GM12878 (cell line): ENCODE measurements at regions of chr11 and their contacts with region 1.

Region 1: GRCh38 chr11:74870485-74870884 is 78.4 kb downstream of the XRRA1 start:
- DNase-seq: no peak
- ATAC-seq: peak; percentile 83
- H3K4me3 ChIP-seq: no peak overlapping the region
- H3K27ac ChIP-seq: no peak overlapping the region
- H3K4me1 ChIP-seq: no peaks in the 10 kb centered on the region
- H3K27me3 ChIP-seq: no peaks in the 10 kb centered on the region
- CTCF ChIP-seq: peak in 2 of 3 experiments; percentile 41 to 48; a peak in 5 of 6 replicates
- EP300 ChIP-seq: no peak
- POLR2A ChIP-seq: no peak
- RAD21 ChIP-seq: peak; percentile 47

Region 2: GRCh38 chr11:73804712-73805111 is 1065.8 kb before region 1 on chr11:
- CTCF ChIA-PET with region 1: no interaction called
- POLR2A ChIA-PET with region 1: no interaction called
- RAD21 ChIA-PET with region 1: no interaction called
- SMC1A ChIA-PET with region 1: no interaction called
- in situ Hi-C with region 1: no loop called
- intact Hi-C with region 1: no loop called
- DNase-seq: no peak
- ATAC-seq: no peak
- H3K4me3 ChIP-seq: no peak overlapping the region
- H3K27ac ChIP-seq: no peak overlapping the region
- H3K4me1 ChIP-seq: no peaks in the 10 kb centered on the region
- H3K27me3 ChIP-seq: no peaks in the 10 kb centered on the region
- CTCF ChIP-seq: no peak
- EP300 ChIP-seq: no peak
- POLR2A ChIP-seq: no peak
- RAD21 ChIP-seq: no peak

Region 3: GRCh38 chr11:74702383-74703007 is 168.0 kb before region 1 on chr11:
- CTCF ChIA-PET with region 1: interaction called, 48 read pairs
- POLR2A ChIA-PET with region 1: no interaction called
- RAD21 ChIA-PET with region 1: interaction called, 3 read pairs
- SMC1A ChIA-PET with region 1: interaction called, 8 read pairs
- in situ Hi-C with region 1: no loop called
- intact Hi-C with region 1: loop called (anchors 1 kb)
- DNase-seq: no peak
- ATAC-seq: peak; percentile 92
- H3K4me3 ChIP-seq: no peak overlapping the region
- H3K27ac ChIP-seq: no peak overlapping the region
- H3K4me1 ChIP-seq: no peaks in the 10 kb centered on the region
- H3K27me3 ChIP-seq: no peaks in the 10 kb centered on the region; a peak in 1 of 4 replicates
- CTCF ChIP-seq: peak; percentile 82 to 94 (median 91)
- EP300 ChIP-seq: no peak
- POLR2A ChIP-seq: no peak
- RAD21 ChIP-seq: peak; percentile 69

Region 4: DNA sequence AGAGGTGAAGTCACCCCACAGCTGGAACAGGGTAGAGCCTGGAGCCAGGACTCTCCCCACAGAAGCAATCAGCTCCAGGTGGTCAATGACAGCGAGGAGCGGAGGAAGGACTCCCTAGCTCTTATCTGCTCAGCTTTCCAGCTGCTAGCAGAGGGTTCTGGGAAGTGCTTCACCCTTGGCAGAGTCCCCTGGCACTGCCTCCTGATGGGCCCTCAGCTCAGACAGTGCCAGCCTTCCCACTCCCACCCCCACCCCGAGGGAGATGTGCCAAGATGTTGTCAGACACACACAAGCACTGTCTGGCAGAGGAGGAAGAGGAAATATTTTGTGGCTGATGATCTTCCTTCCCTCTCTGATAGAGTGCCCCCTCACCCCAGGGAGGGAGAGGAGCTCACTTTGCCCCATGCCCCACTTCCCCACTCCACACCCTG is 324.7 kb after region 1 on chr11:
- CTCF ChIA-PET with region 1: no interaction called
- POLR2A ChIA-PET with region 1: no interaction called
- RAD21 ChIA-PET with region 1: no interaction called
- SMC1A ChIA-PET with region 1: no interaction called
- in situ Hi-C with region 1: no loop called
- intact Hi-C with region 1: no loop called
- DNase-seq: no peak
- ATAC-seq: no peak
- H3K4me3 ChIP-seq: no peak overlapping the region
- H3K27ac ChIP-seq: no peak overlapping the region
- H3K4me1 ChIP-seq: no peaks in the 10 kb centered on the region
- H3K27me3 ChIP-seq: peaks cover 1 to 4% of the 10 kb centered on the region in 2 experiments
- CTCF ChIP-seq: no peak
- EP300 ChIP-seq: no peak
- POLR2A ChIP-seq: no peak
- RAD21 ChIP-seq: no peak